ENCODE measurements at regions of chr17 and their contacts with region 1.

Region 1: GRCh38 chr17:42388381-42389134 is at the start of gene STAT3:
- DNase-seq: peak; percentile 100
- ATAC-seq: peak; percentile 80 to 88
- H3K4me3 Mint-ChIP-seq: peak within 1 kb of the TSS; percentile 91 to 99 (median 97)
- H3K27ac Mint-ChIP-seq: peak within 1 kb of the TSS; percentile 98 to 100 (median 100)
- H3K4me1 Mint-ChIP-seq: peaks cover 16 to 64% (median 46%) of the 10 kb centered on the region in 4 donors
- H3K27me3 Mint-ChIP-seq: no peaks in the 10 kb centered on the region
- polyA plus RNA-seq, gene STAT3: 129 to 154 (median 153) TPM

Region 2: GRCh38 chr17:42312285-42313130 is 76.0 kb before region 1 on chr17:
- POLR2A ChIA-PET with region 1: interaction called, 49 read pairs
- DNase-seq: peak; percentile 66 to 87 (median 74)
- ATAC-seq: peak; percentile 72 to 73
- H3K4me3 Mint-ChIP-seq: peak overlapping the region; percentile 61 to 86 (median 74)
- H3K27ac Mint-ChIP-seq: peak overlapping the region; percentile 84 to 93 (median 90)
- H3K4me1 Mint-ChIP-seq: peaks cover 32 to 80% (median 66%) of the 10 kb centered on the region in 4 donors
- H3K27me3 Mint-ChIP-seq: no peaks in the 10 kb centered on the region

Region 3: GRCh38 chr17:42399948-42400843 is 11.6 kb after region 1 on chr17:
- POLR2A ChIA-PET with region 1: interaction called, 33 read pairs
- DNase-seq: peak in 2 of 10 donors; percentile 27 to 35
- ATAC-seq: peak; percentile 64 to 71
- H3K4me3 Mint-ChIP-seq: peak overlapping the region in 8 of 10 donors; percentile 3 to 63 (median 52)
- H3K27ac Mint-ChIP-seq: peak overlapping the region; percentile 31 to 85 (median 60)
- H3K4me1 Mint-ChIP-seq: peaks cover 16 to 22% (median 19%) of the 10 kb centered on the region in 4 donors
- H3K27me3 Mint-ChIP-seq: no peaks in the 10 kb centered on the region

Region 4: DNA sequence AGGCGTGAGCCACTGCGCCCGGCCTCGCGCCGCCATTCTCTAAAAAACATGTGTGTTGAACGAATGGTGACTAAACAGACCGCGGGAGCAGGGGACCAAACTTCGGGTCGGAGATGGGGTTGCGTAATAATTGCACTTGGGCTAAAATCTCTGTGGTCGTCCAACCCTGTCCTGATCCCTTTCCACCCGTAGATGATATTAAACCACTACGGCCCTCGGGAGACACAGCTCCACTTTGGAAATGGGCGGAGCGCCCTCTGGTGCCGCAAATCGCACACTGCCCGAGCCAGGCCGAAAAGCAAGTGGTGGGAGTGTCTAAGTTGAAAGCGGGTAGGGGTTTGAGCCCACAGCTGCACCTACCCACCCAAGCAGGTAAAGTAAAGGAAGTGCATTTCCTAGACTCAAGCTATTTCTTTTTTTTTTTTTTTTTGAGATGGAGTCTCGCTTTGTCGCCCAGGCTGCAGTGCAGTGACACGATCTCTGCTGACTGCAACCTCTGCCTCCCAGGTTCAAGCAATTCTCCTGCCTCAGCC is 17.5 kb after region 1 on chr17:
- POLR2A ChIA-PET with region 1: interaction called, 33 read pairs
- DNase-seq: peak; percentile 70 to 88 (median 80)
- ATAC-seq: peak; percentile 85 to 86
- H3K4me3 Mint-ChIP-seq: peak overlapping the region in 2 of 10 donors; percentile 8 to 22
- H3K27ac Mint-ChIP-seq: peak overlapping the region in 5 of 10 donors; percentile 33 to 61 (median 53)
- H3K4me1 Mint-ChIP-seq: peaks cover 10 to 21% (median 20%) of the 10 kb centered on the region in 4 donors
- H3K27me3 Mint-ChIP-seq: no peaks in the 10 kb centered on the region

Measured in naive thymus-derived CD8-positive, alpha-beta T cell (primary cell).